WTC11 (cell line): ENCODE measurements at regions of chr20 and their contacts with region 1.

Region 1: DNA sequence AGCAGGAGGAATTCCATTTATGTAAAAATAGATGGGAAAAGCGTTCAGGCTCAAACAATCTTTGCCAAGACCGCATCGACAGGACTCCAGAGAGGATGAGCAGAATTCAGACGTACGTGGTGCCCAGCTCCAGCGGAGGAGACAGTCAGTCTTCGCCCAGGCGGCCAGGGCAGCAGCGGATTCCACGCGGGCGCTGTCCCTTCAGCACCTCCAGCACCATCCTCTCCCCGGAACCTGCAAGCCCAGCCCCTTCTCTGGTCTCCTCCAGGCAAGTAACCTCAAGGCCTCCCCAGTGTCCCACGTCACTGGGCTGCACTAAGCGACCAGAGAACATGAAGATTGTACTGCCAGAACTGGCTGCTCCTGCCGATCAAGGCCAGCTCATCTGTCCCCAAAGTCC is 2.8 kb upstream of the KCNQ2 start:
- DNase-seq: peak; percentile 71
- ATAC-seq: peak; percentile 28
- H3K4me3 Mint-ChIP-seq: no peak overlapping the region
- H3K27ac Mint-ChIP-seq: no peak overlapping the region
- H3K4me1 Mint-ChIP-seq: peaks cover 38% of the 10 kb centered on the region
- H3K27me3 Mint-ChIP-seq: peaks cover 11% of the 10 kb centered on the region
- CTCF ChIP-seq: no peak

Region 2: DNA sequence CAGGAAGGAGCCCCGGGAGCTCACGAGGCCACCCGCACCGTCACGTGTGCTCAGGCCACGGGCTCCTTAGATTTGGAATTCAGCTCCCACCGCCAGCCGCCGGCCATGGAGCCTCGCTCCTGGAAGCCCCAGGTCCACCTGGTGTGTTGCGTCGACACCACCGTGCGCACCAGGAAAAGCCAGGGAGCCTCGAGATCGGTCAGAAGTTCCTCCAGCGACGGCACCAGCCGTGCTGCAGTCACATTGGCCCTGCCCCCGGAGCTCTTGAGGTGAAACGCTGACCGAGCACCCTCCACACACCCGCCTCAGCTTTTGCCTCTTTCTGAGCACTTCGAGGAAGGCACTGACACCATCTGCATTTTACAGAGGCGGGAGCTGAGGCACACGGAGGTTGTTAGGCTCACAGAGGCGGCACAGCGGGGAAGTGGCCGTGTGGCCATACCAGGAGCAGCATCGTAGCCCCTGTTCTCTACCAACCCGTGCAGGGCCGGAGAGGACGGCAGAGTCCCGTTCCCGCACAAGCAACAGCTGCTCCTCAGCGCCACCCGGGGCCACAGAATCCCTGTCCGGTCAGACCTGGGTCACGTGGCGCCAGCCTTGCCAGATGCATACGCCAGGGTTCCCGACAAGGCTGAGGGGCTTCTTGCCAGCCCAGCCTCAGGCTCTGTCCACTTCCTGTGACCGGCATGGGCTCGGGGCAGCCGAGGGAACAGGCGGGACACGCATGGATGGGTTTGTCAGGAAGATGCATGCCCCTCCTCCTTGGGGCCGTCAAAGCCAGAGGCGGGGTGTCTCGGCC is 228.5 kb before region 1 on chr20:
- CTCF ChIA-PET with region 1: no interaction called
- POLR2A ChIA-PET with region 1: no interaction called
- DNase-seq: peak; percentile 54
- ATAC-seq: peak; percentile 71
- H3K4me3 Mint-ChIP-seq: no peak overlapping the region
- H3K27ac Mint-ChIP-seq: no peak overlapping the region
- H3K4me1 Mint-ChIP-seq: peaks cover 3% of the 10 kb centered on the region
- H3K27me3 Mint-ChIP-seq: peaks cover 7% of the 10 kb centered on the region; the same call in 1 of the 2 replicates
- CTCF ChIP-seq: no peak

Region 3: GRCh38 chr20:63295422-63295821 is 179.8 kb before region 1 on chr20:
- CTCF ChIA-PET with region 1: no interaction called
- POLR2A ChIA-PET with region 1: no interaction called
- DNase-seq: no peak
- ATAC-seq: no peak
- H3K4me3 Mint-ChIP-seq: peak overlapping the region; percentile 18; the same call in 1 of the 2 replicates
- H3K27ac Mint-ChIP-seq: no peak overlapping the region
- H3K4me1 Mint-ChIP-seq: peaks cover 20% of the 10 kb centered on the region
- H3K27me3 Mint-ChIP-seq: peaks cover 8% of the 10 kb centered on the region
- CTCF ChIP-seq: no peak

Region 4: GRCh38 chr20:63442100-63442493 is 33.1 kb before region 1 on chr20:
- CTCF ChIA-PET with region 1: interaction called, 12 read pairs
- POLR2A ChIA-PET with region 1: no interaction called
- DNase-seq: peak; percentile 77
- ATAC-seq: peak; percentile 79
- H3K4me3 Mint-ChIP-seq: no peak overlapping the region
- H3K27ac Mint-ChIP-seq: no peak overlapping the region
- H3K4me1 Mint-ChIP-seq: peaks cover 2% of the 10 kb centered on the region
- H3K27me3 Mint-ChIP-seq: no peaks in the 10 kb centered on the region
- CTCF ChIP-seq: 0 out of 2 replicates have a peak, but pooled peaks have one; percentile 23

Region 5: GRCh38 chr20:63463400-63464288 is 11.6 kb before region 1 on chr20:
- CTCF ChIA-PET with region 1: interaction called, 12 read pairs
- POLR2A ChIA-PET with region 1: interaction called, 3 read pairs
- DNase-seq: no peak
- ATAC-seq: no peak
- H3K4me3 Mint-ChIP-seq: no peak overlapping the region
- H3K27ac Mint-ChIP-seq: peak overlapping the region; percentile 4; the same call in 1 of the 2 replicates
- H3K4me1 Mint-ChIP-seq: peaks cover 29% of the 10 kb centered on the region
- H3K27me3 Mint-ChIP-seq: no peaks in the 10 kb centered on the region
- CTCF ChIP-seq: no peak